Sigmoid colon (tissue), 7 donors: ENCODE measurements at regions of chr5 and their contacts with region 1.

Region 1: DNA sequence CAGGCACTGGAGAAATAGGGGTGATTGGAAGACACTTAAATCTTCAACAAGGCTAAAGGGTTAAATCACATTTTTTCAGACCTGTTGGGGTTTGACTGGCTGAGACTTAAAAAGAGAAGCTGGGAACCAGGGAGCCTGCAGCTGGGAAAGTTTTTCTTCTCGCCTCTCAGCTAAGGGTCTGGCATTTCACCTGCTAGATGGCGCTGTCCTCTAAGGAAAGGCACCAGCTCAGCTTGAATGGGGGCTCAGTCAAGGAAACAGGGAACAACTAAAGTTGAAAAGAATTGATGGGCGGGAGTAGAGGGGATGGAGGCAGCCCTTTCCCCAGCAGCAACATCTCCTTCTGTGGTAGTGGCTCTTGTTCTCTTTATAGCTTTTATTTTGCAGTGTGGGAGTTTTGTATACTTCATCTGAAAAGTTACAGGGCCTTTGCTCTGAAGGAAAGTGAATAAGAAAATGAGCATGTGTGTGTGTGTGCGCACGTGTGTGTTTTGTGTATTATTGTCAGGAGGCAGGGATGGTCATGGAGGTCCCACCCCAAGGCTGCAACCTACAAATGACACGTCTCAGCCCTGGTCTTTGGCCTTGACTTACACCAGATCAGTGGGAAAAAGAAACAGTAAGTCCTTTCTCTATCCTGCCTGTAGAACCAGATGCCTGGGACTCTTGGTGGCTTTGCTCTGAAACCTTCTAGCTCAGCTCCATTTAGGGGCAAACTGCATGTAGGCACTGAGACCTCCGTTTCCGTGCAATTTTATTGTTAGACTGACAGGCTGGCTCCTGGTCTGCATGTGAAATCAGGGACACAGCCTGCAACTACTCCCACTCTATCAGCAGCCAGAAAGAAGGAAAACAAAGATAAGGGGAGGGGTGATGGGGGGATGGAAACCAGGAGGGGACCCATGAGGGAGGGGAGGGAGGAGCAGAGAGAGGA is 316.2 kb upstream of the CLINT1 start:
- DNase-seq: peak; percentile 84
- H3K4me3 ChIP-seq: no peak overlapping the region
- H3K27ac ChIP-seq: peak overlapping the region in 3 of 4 donors; percentile 2 to 34 (median 17)
- H3K4me1 ChIP-seq: peaks cover 0 to 14% (median 2%) of the 10 kb centered on the region in 4 donors
- H3K27me3 ChIP-seq: no peaks in the 10 kb centered on the region
- CTCF ChIP-seq: peak; percentile 46 to 73 (median 58)
- EP300 ChIP-seq: no peak
- POLR2A ChIP-seq: no peak

Region 2: DNA sequence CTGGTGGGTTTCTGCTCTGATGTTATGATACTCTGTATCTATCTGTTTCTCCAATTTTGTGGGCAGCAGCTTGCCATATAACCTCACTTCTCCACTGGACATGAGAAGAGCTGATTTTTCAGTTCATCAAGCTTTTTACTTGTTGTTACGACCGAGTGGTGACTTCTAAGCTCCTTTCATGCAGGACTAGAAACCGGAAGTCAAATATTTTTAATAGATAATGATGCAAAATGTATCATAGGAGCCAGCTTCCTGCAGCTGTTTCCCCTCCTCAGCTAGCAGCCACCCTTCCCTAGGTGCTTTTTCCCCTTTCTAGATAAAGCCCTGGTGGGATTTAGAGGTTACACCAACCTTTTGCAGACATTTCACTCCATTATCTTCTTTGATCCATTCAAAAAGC is 582.6 kb before region 1 on chr5:
- intact Hi-C with region 1: no loop called
- DNase-seq: no peak
- H3K4me3 ChIP-seq: no peak overlapping the region
- H3K27ac ChIP-seq: no peak overlapping the region
- H3K4me1 ChIP-seq: no peaks in the 10 kb centered on the region
- H3K27me3 ChIP-seq: no peaks in the 10 kb centered on the region
- CTCF ChIP-seq: no peak
- EP300 ChIP-seq: no peak
- POLR2A ChIP-seq: no peak

Region 3: DNA sequence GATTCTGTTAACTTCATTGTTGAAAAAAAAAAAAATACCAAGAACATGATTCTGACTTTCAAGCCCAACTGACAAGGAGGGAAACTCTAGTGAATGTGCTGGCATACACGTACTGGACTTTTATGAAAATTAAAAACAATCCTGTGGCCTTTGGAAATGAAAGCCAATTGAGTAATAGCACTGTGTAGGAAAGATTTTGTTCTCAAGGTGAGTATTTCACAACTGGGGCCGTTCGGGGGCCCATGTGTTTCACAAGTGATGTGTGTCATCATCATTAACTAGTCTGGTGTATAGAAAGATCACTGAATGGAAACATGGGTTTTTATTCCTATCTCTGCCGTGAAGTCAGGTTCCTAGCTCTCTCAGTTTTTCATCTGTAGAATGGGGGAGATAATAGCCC is 288.8 kb after region 1 on chr5:
- intact Hi-C with region 1: loop called (anchors 10 kb)
- DNase-seq: peak; percentile 91
- H3K4me3 ChIP-seq: no peak overlapping the region
- H3K27ac ChIP-seq: peak overlapping the region; percentile 14 to 69 (median 33)
- H3K4me1 ChIP-seq: peaks cover 0 to 43% (median 30%) of the 10 kb centered on the region in 4 donors
- H3K27me3 ChIP-seq: no peaks in the 10 kb centered on the region
- CTCF ChIP-seq: no peak
- EP300 ChIP-seq: peak in 1 of 4 donors; percentile 28
- POLR2A ChIP-seq: no peak

Region 4: DNA sequence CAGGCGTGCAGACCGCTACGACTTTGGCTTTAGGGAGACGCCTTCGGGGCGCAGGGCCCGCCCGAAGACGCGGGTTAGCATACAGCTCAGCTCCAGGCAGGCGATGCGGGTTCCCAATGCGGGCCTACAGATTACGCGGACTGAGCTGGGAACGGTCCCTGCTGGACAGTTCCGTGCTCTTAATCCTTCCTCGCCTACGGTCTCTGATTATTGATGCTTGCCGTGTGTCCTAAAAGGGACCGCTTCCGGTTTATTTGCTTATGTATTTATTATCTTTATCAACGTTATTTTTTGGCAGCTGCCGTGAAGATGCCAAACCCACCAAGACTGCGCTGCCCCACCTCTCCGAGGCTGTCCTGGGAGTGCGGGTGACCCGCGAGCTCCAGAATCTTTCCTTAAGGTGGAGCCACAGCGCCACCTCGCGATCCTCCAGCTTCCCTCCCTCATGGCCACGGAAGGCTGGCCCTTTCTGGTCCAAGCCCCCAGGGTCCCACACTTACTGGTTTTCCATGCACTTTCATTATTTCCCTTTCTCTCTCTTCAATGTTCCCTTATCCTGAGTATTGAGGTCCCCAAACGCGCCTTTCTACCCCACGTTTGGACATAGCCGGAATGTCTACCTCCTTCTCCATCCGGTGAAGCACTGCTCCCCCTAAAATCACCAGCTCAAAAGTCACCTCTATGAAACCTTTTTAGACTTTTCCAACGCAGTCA is 931.5 kb after region 1 on chr5:
- intact Hi-C with region 1: loop called (anchors 2 kb)
- DNase-seq: peak; percentile 88
- H3K4me3 ChIP-seq: peak overlapping the region; percentile 8 to 36 (median 32)
- H3K27ac ChIP-seq: peak overlapping the region in 1 of 4 donors; percentile 51
- H3K4me1 ChIP-seq: peaks cover 0 to 26% (median 24%) of the 10 kb centered on the region in 4 donors
- H3K27me3 ChIP-seq: peaks cover 21 to 68% (median 55%) of the 10 kb centered on the region in 3 donors
- CTCF ChIP-seq: peak; percentile 73 to 91 (median 86)
- EP300 ChIP-seq: no peak
- POLR2A ChIP-seq: no peak